CD8-positive, alpha-beta memory T cell (primary cell): ENCODE measurements at regions of chr1 and their contacts with region 1.

Region 1: GRCh38 chr1:8169364-8170058 is 143.4 kb upstream of the ERRFI1 start:
- DNase-seq: peak; percentile 30 to 78 (median 55)
- H3K4me3 ChIP-seq: peak overlapping the region; percentile 28
- H3K4me3 Mint-ChIP-seq: peak overlapping the region in 6 of 7 donors; percentile 60 to 75 (median 68)
- H3K27ac ChIP-seq: peak overlapping the region; percentile 82
- H3K27ac Mint-ChIP-seq: peak overlapping the region; percentile 87 to 98 (median 95)
- H3K4me1 ChIP-seq: peaks cover 35% of the 10 kb centered on the region
- H3K4me1 Mint-ChIP-seq: peaks cover 43 to 57% (median 48%) of the 10 kb centered on the region in 3 donors
- H3K27me3 ChIP-seq: no peaks in the 10 kb centered on the region
- H3K27me3 Mint-ChIP-seq: no peaks in the 10 kb centered on the region

Region 2: GRCh38 chr1:8154621-8155052 is 14.9 kb before region 1 on chr1:
- CTCF ChIA-PET with region 1: interaction called, 5 read pairs
- POLR2A ChIA-PET with region 1: interaction called, 21 read pairs
- DNase-seq: no peak
- H3K4me3 ChIP-seq: no peak overlapping the region
- H3K4me3 Mint-ChIP-seq: no peak overlapping the region
- H3K27ac ChIP-seq: no peak overlapping the region
- H3K27ac Mint-ChIP-seq: peak overlapping the region in 1 of 8 donors; percentile 65
- H3K4me1 ChIP-seq: peaks cover 49% of the 10 kb centered on the region
- H3K4me1 Mint-ChIP-seq: peaks cover 35 to 50% (median 39%) of the 10 kb centered on the region in 3 donors
- H3K27me3 ChIP-seq: no peaks in the 10 kb centered on the region
- H3K27me3 Mint-ChIP-seq: no peaks in the 10 kb centered on the region